CD8-positive, alpha-beta T cell (primary cell): ENCODE measurements at regions of chrX and their contacts with region 1.

Region 1: DNA sequence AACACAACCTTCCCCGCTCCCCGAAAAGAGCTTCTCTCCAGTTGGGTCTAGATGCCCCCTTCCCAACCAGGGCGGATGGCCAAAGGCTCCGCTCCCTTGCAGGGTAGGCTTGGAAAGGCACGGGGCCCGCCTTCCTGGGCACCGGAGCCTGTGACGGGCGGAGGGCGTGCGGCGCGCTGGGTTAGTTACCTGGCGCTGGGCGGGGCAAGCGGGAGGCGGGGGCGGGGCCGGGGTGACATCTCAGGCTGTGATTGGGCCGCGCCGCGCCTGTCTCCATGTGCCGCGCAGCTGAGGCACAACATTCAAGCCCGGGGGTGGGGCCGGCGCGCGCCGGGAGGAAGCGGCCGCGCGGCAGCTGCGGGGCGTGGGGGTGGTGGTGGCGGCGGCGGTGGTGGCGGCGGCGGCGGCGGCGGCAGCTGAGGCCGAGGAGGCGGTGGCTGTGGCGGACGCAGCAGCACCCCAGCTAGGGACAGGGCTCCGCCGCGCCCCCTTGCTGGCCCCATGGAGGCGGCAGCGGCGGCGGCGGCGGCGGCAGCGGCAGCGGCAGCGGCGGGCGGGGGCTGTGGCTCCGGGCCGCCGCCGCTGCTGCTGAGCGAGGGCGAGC is at the start of gene REPS2:
- DNase-seq: peak; percentile 58 to 87 (median 75)
- ATAC-seq: peak; percentile 97
- H3K4me3 ChIP-seq: peak within 1 kb of the TSS; percentile 46 to 54
- H3K4me3 Mint-ChIP-seq: peak within 1 kb of the TSS; percentile 81
- H3K27ac ChIP-seq: peak within 1 kb of the TSS in 1 of 2 experiments; percentile 33
- H3K27ac Mint-ChIP-seq: no peak within 1 kb of the TSS
- H3K4me1 ChIP-seq: peaks cover 3% of the 10 kb centered on the region
- H3K4me1 Mint-ChIP-seq: peaks cover 7% of the 10 kb centered on the region
- H3K27me3 ChIP-seq: no peaks in the 10 kb centered on the region
- H3K27me3 Mint-ChIP-seq: peaks cover 10% of the 10 kb centered on the region
- CTCF ChIP-seq: no peak
- total RNA-seq, gene REPS2: 0.11 TPM in 1 of 2 experiments, not detected in the other

Region 2: GRCh38 chrX:16892504-16893362 is 53.7 kb before region 1 on chrX:
- CTCF ChIA-PET with region 1: no interaction called
- POLR2A ChIA-PET with region 1: no interaction called
- intact Hi-C with region 1: loop called (anchors 2 to 5 kb)
- DNase-seq: peak; percentile 7 to 79 (median 53)
- ATAC-seq: peak; percentile 39
- H3K4me3 ChIP-seq: no peak overlapping the region
- H3K4me3 Mint-ChIP-seq: no peak overlapping the region
- H3K27ac ChIP-seq: no peak overlapping the region
- H3K27ac Mint-ChIP-seq: no peak overlapping the region
- H3K4me1 ChIP-seq: peaks cover 9% of the 10 kb centered on the region
- H3K4me1 Mint-ChIP-seq: peaks cover 13% of the 10 kb centered on the region
- H3K27me3 ChIP-seq: no peaks in the 10 kb centered on the region
- H3K27me3 Mint-ChIP-seq: no peaks in the 10 kb centered on the region
- CTCF ChIP-seq: peak; percentile 65

Region 3: GRCh38 chrX:17046478-17047097 is 100.1 kb after region 1 on chrX:
- CTCF ChIA-PET with region 1: no interaction called
- POLR2A ChIA-PET with region 1: interaction called, 3 read pairs
- intact Hi-C with region 1: loop called in 1 of 2 experiments (anchors 5 kb)
- DNase-seq: peak in 6 of 9 experiments; percentile 2 to 53 (median 28)
- ATAC-seq: peak; percentile 59
- H3K4me3 ChIP-seq: no peak overlapping the region
- H3K4me3 Mint-ChIP-seq: no peak overlapping the region
- H3K27ac ChIP-seq: no peak overlapping the region
- H3K27ac Mint-ChIP-seq: no peak overlapping the region
- H3K4me1 ChIP-seq: no peaks in the 10 kb centered on the region
- H3K4me1 Mint-ChIP-seq: no peaks in the 10 kb centered on the region
- H3K27me3 ChIP-seq: no peaks in the 10 kb centered on the region
- H3K27me3 Mint-ChIP-seq: no peaks in the 10 kb centered on the region
- CTCF ChIP-seq: peak; percentile 40